Mammary epithelial cell (primary cell): ENCODE measurements at regions of chr1 and their contacts with region 1.

Region 1: GRCh38 chr1:7646981-7647901 is 123.9 kb upstream of the VAMP3 start:
- DNase-seq: peak; percentile 26
- H3K4me3 ChIP-seq: no peak overlapping the region
- H3K27ac ChIP-seq: no peak overlapping the region
- H3K4me1 ChIP-seq: peaks cover 7% of the 10 kb centered on the region
- H3K27me3 ChIP-seq: peaks cover 1% of the 10 kb centered on the region
- CTCF ChIP-seq: peak; percentile 61 to 93

Region 2: DNA sequence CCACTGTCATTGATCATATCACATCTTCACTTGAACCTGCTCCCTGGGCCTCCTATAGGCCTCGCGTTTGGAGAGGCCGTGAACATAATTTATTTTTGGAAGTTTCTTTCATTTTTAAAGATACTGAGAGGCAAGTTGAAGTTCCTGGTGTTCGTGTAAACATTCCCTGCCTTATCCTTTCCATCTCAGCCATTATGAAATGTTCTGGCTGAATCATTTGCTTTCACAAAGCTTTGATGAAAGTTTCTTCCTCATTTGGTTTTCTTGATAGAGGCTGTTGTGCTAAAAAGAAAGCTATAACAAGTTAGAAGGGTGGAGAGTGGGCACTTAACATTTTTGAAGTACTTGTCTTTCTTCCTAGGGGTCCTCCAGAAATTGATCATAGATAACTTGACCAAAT is 846.5 kb before region 1 on chr1:
- CTCF ChIA-PET with region 1: no interaction called
- dilution Hi-C with region 1: no loop called
- in situ Hi-C with region 1: no loop called
- intact Hi-C with region 1: loop called (anchors 10 kb)
- DNase-seq: no peak
- H3K4me3 ChIP-seq: no peak overlapping the region
- H3K27ac ChIP-seq: no peak overlapping the region
- H3K4me1 ChIP-seq: peaks cover 17% of the 10 kb centered on the region
- H3K27me3 ChIP-seq: no peaks in the 10 kb centered on the region
- CTCF ChIP-seq: no peak

Region 3: DNA sequence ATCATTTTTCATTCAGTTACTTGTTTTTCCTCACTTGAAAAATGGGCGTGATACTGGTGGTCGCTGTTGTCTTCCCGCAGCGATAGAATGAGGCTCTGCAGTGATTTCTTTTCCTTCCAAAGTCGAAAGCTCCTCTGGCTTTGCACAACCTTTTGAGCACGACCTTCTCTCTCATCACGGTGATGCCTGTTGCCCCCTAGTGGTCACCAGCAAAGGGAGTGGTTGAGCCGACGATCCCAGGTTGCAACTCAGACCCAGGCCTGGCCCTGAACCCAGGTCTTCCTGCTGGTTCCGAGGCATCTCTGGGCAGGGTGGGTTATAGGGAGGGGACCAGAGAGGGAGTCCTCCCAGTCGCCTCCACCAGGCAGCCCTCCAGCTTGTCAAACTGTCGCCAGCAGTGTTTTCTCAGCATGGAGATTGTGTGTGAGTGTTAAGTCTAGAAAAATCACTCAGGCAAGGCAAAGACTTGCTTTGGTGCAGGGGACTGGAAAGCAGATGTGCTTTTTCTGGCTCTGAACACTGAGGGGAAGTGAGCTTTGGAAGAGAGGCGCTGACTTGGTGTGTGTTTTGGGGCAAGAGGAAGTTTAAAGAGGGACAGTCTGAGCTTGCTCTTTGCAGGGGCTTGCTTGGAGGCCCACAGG is 576.7 kb before region 1 on chr1:
- CTCF ChIA-PET with region 1: no interaction called
- dilution Hi-C with region 1: no loop called
- in situ Hi-C with region 1: no loop called
- intact Hi-C with region 1: loop called (anchors 1 kb)
- DNase-seq: peak; percentile 34
- H3K4me3 ChIP-seq: no peak overlapping the region
- H3K27ac ChIP-seq: no peak overlapping the region
- H3K4me1 ChIP-seq: no peaks in the 10 kb centered on the region
- H3K27me3 ChIP-seq: peaks cover 4% of the 10 kb centered on the region
- CTCF ChIP-seq: peak; percentile 83 to 91

Region 4: GRCh38 chr1:7224644-7225043 is 422.6 kb before region 1 on chr1:
- CTCF ChIA-PET with region 1: no interaction called
- dilution Hi-C with region 1: no loop called
- in situ Hi-C with region 1: loop called in 1 of 2 experiments (anchors 25 kb)
- intact Hi-C with region 1: no loop called
- DNase-seq: no peak
- H3K4me3 ChIP-seq: no peak overlapping the region
- H3K27ac ChIP-seq: no peak overlapping the region
- H3K4me1 ChIP-seq: no peaks in the 10 kb centered on the region
- H3K27me3 ChIP-seq: no peaks in the 10 kb centered on the region
- CTCF ChIP-seq: peak; percentile 6 to 17

Region 5: GRCh38 chr1:7454052-7454815 is 193.0 kb before region 1 on chr1:
- CTCF ChIA-PET with region 1: no interaction called
- dilution Hi-C with region 1: no loop called
- in situ Hi-C with region 1: no loop called
- intact Hi-C with region 1: loop called (anchors 1 kb)
- DNase-seq: no peak
- H3K4me3 ChIP-seq: no peak overlapping the region
- H3K27ac ChIP-seq: no peak overlapping the region
- H3K4me1 ChIP-seq: peaks cover 9% of the 10 kb centered on the region
- H3K27me3 ChIP-seq: no peaks in the 10 kb centered on the region
- CTCF ChIP-seq: peak; percentile 7 to 33